ENCODE measurements at regions of chr1 and their contacts with region 1.

Region 1: GRCh38 chr1:1906185-1907097 is 8.6 kb upstream of the CALML6 start:
- DNase-seq: no peak
- ATAC-seq: peak; percentile 74
- H3K4me3 ChIP-seq: no peak overlapping the region
- H3K27ac ChIP-seq: no peak overlapping the region
- H3K4me1 ChIP-seq: peaks cover 22% of the 10 kb centered on the region
- H3K27me3 ChIP-seq: no peaks in the 10 kb centered on the region
- CTCF ChIP-seq: peak; percentile 93 to 97 (median 95)
- EP300 ChIP-seq: no peak
- POLR2A ChIP-seq: no peak
- RAD21 ChIP-seq: peak; percentile 96

Region 2: DNA sequence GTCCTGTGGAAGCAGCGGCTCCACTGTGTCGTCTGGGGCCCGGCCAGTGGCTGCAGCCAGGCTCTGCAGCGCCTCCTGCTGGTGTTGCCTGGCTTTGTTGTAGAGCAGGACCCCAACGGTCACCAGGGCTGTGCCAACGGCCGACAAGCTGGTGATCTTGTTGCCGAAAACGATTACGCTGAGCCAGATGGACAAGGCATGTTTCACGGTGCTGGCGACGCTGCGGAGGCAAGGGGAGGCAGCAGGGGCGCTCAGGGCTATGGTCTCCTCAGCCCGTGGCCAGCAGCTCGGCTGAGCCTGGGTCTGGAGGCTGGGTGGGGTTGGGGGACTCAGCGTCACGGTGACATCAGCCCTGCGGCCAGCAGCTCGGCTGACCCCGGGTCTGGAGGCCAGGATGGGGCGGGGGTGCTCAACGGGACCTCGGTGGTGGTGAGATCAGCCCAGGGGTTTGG is 240.6 kb before region 1 on chr1:
- CTCF ChIA-PET with region 1: no interaction called
- POLR2A ChIA-PET with region 1: interaction called, 11 read pairs
- RAD21 ChIA-PET with region 1: no interaction called
- SMC1A ChIA-PET with region 1: no interaction called
- in situ Hi-C with region 1: no loop called
- intact Hi-C with region 1: no loop called
- DNase-seq: no peak
- ATAC-seq: peak; percentile 51; the same call in 2 of the 3 replicates
- H3K4me3 ChIP-seq: no peak overlapping the region
- H3K27ac ChIP-seq: no peak overlapping the region
- H3K4me1 ChIP-seq: no peaks in the 10 kb centered on the region
- H3K27me3 ChIP-seq: no peaks in the 10 kb centered on the region
- CTCF ChIP-seq: peak; percentile 21 to 53 (median 47)
- EP300 ChIP-seq: no peak
- POLR2A ChIP-seq: peak; percentile 29; the same call in 1 of the 2 replicates
- RAD21 ChIP-seq: 0 out of 2 replicates have a peak, but pooled peaks have one; percentile 3

Region 3: DNA sequence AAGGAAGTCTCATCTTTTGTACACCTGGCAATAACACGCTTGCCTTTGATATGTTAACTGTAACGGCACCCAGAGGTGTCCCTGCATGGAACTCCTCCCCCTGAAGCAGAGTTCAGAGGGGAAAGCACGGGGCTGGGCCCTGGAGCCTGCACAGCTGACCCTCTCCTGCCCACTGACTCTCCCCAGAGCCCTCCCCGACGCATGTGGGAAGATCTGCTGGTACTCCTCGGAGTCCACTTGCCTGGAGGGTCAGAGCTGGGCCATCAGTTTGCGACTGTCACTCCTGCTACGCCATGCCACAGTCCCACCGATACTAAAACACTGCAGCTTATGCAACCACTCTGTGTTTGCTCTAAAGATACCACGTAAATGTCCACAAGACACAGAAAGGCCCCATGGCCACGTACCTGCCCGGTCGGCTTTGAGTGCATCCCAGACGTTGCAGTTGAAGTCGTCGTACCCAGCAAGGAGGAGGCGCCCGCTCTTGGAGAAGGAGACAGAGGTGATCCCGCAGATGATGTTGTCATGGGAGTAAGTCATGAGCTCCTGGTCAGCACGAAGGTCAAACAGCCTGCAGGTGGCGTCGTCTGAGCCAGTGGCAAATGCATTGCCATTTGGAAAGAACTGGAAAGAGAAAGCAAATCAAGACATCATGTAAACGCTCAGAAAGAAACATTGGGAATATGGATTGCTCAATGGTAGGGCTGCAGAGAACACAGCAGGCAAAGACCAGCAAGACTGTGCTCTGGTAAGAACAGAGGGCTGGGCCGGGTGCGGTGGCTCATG is 117.6 kb before region 1 on chr1:
- CTCF ChIA-PET with region 1: interaction called, 14 read pairs
- POLR2A ChIA-PET with region 1: interaction called, 4 read pairs
- RAD21 ChIA-PET with region 1: interaction called, 17 read pairs
- SMC1A ChIA-PET with region 1: interaction called, 10 read pairs
- in situ Hi-C with region 1: loop called (anchors 10 kb)
- intact Hi-C with region 1: no loop called
- DNase-seq: no peak
- ATAC-seq: 0 out of 3 replicates have a peak, but pooled peaks have one; percentile 31
- H3K4me3 ChIP-seq: no peak overlapping the region
- H3K27ac ChIP-seq: no peak overlapping the region
- H3K4me1 ChIP-seq: no peaks in the 10 kb centered on the region
- H3K27me3 ChIP-seq: no peaks in the 10 kb centered on the region
- CTCF ChIP-seq: peak; percentile 33 to 46 (median 37); a peak in 4 of 6 replicates
- EP300 ChIP-seq: no peak
- POLR2A ChIP-seq: no peak; the same call in 1 of the 2 replicates
- RAD21 ChIP-seq: peak; percentile 38

Region 4: GRCh38 chr1:1826356-1827088 is 79.9 kb before region 1 on chr1:
- CTCF ChIA-PET with region 1: interaction called, 15 read pairs
- POLR2A ChIA-PET with region 1: interaction called, 3 read pairs
- RAD21 ChIA-PET with region 1: interaction called, 4 read pairs
- SMC1A ChIA-PET with region 1: interaction called, 9 read pairs
- in situ Hi-C with region 1: no loop called
- intact Hi-C with region 1: loop called (anchors 5 kb)
- DNase-seq: no peak
- ATAC-seq: no peak
- H3K4me3 ChIP-seq: no peak overlapping the region
- H3K27ac ChIP-seq: no peak overlapping the region
- H3K4me1 ChIP-seq: peaks cover 31% of the 10 kb centered on the region
- H3K27me3 ChIP-seq: no peaks in the 10 kb centered on the region
- CTCF ChIP-seq: no peak
- EP300 ChIP-seq: no peak
- POLR2A ChIP-seq: no peak
- RAD21 ChIP-seq: no peak

Region 5: DNA sequence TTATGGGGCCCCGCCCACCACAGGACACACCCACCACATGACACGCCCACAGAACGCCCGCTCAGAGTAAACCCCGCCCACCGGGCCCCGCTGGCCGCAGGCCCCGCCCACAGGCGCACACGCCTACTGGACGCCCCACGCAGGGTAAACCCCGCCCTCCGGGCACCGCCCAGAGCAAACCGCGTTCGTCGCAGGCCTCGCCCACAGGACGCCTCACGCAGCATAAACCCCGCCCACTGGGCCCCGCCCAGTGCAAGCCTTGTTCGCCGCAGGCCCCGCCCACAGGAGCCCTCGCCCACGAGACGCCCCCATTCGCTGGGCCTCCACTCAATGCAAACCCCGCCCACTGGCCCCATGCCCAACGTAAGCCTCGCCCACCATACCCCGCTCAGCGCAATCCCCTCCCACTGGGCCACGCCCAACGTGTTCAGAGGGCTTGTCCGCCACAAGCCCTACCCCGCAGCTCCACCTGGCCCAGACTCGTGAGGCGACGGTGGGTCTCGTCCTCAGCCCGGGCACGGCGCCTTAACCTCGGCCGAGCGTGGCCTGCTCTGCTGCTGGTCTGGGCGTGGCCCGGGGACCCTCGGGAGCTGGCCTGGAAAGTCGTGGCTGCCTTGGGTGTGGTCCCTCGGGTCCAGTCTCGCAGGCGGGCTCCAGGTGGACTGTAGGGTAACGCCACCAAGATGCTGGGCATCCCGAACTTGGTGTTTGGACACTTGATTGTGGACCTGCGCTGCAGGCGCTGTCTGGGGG is 13.0 kb after region 1 on chr1:
- CTCF ChIA-PET with region 1: no interaction called
- POLR2A ChIA-PET with region 1: no interaction called
- RAD21 ChIA-PET with region 1: no interaction called
- SMC1A ChIA-PET with region 1: no interaction called
- in situ Hi-C with region 1: no loop called
- intact Hi-C with region 1: loop called (anchors 1 kb)
- DNase-seq: peak; percentile 90
- ATAC-seq: peak; percentile 93
- H3K4me3 ChIP-seq: peak overlapping the region; percentile 60
- H3K27ac ChIP-seq: no peak overlapping the region
- H3K4me1 ChIP-seq: peaks cover 7% of the 10 kb centered on the region
- H3K27me3 ChIP-seq: peaks cover 0 to 2% of the 10 kb centered on the region in 2 experiments; a peak in 1 of 4 replicates
- CTCF ChIP-seq: no peak
- EP300 ChIP-seq: no peak
- POLR2A ChIP-seq: no peak
- RAD21 ChIP-seq: no peak